HEK293 (cell line): ENCODE measurements at regions of chr6 and their contacts with region 1.

Region 1: GRCh38 chr6:2434912-2435311 is 189.5 kb upstream of the GMDS start:
- H3K4me3 ChIP-seq: no peak overlapping the region
- H3K27ac ChIP-seq: no peak overlapping the region
- H3K4me1 ChIP-seq: no peaks in the 10 kb centered on the region
- CTCF ChIP-seq: no peak

Region 2: GRCh38 chr6:2376429-2377355 is 58.2 kb before region 1 on chr6:
- CTCF ChIA-PET with region 1: no interaction called
- POLR2A ChIA-PET with region 1: no interaction called
- H3K4me3 ChIP-seq: no peak overlapping the region
- H3K27ac ChIP-seq: no peak overlapping the region
- H3K4me1 ChIP-seq: peaks cover 8% of the 10 kb centered on the region
- CTCF ChIP-seq: no peak

Region 3: GRCh38 chr6:2448820-2449571 is 14.1 kb after region 1 on chr6:
- CTCF ChIA-PET with region 1: interaction called, 35 read pairs
- POLR2A ChIA-PET with region 1: no interaction called
- H3K4me3 ChIP-seq: peak overlapping the region; percentile 20
- H3K27ac ChIP-seq: no peak overlapping the region
- H3K4me1 ChIP-seq: peaks cover 13% of the 10 kb centered on the region
- CTCF ChIP-seq: peak; percentile 87